ENCODE measurements at regions of chr4 and their contacts with region 1.

Region 1: DNA sequence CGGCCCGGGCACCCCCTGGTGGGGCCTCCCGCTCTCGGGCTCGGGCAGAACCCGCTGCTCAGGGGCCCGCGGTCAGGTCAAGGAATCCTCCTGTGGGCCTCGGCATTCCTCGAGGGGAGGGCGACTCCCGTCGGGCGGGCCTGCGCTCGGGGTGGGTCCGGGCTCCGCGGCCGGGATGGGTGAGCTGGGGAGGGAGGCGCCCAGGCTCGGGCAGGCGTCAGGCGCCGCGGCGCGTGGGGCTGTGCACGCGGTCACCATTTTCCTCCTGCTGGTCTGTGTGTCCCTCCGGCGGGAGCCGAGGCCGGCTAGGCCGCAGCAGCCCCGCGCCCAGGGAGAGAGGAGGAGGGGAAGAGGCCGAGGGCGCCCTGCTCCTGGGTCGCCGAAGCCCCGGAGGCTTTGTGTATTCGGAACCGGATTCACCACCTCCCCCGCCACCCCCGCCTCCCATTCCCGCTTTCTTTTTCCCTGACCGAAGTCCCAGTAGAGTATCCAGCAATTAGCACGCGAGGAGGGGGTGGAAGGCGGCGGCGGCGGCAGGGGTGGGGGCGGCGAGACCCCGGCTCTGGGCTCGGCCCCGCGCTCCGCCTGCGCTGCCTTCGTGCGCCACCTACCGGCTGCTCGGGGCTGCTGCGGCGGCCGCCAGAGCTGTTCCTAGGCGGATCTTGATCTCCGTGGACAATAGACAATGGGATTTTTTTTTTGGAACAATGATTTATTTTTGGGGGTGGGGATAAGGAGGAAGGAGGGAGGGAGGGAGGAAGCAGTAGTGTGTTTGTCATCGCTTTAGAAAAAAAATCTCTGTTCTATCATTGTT is 99.0 kb upstream of the MAML3 start:
- DNase-seq: peak; percentile 94
- H3K4me3 ChIP-seq: peak overlapping the region; percentile 65 to 80 (median 76)
- H3K27ac ChIP-seq: peak overlapping the region; percentile 86 to 96 (median 90)
- H3K4me1 ChIP-seq: peaks cover 8 to 62% (median 51%) of the 10 kb centered on the region in 4 donors
- H3K27me3 ChIP-seq: no peaks in the 10 kb centered on the region
- CTCF ChIP-seq: peak; percentile 90 to 97 (median 97)
- EP300 ChIP-seq: no peak
- POLR2A ChIP-seq: no peak

Region 2: GRCh38 chr4:139656614-139657486 is 596.1 kb before region 1 on chr4:
- intact Hi-C with region 1: loop called (anchors 5 kb)
- DNase-seq: no peak
- H3K4me3 ChIP-seq: no peak overlapping the region
- H3K27ac ChIP-seq: peak overlapping the region in 1 of 4 donors; percentile 29
- H3K4me1 ChIP-seq: peaks cover 17 to 27% (median 23%) of the 10 kb centered on the region in 4 donors
- H3K27me3 ChIP-seq: no peaks in the 10 kb centered on the region
- CTCF ChIP-seq: peak; percentile 56 to 87 (median 75)
- EP300 ChIP-seq: no peak
- POLR2A ChIP-seq: no peak

Region 3: GRCh38 chr4:140012688-140013486 is 240.1 kb before region 1 on chr4:
- intact Hi-C with region 1: loop called (anchors 5 kb)
- DNase-seq: no peak
- H3K4me3 ChIP-seq: peak overlapping the region in 3 of 4 donors; percentile 4 to 28 (median 9)
- H3K27ac ChIP-seq: no peak overlapping the region
- H3K4me1 ChIP-seq: peaks cover 0 to 9% (median 9%) of the 10 kb centered on the region in 4 donors
- H3K27me3 ChIP-seq: no peaks in the 10 kb centered on the region
- CTCF ChIP-seq: peak; percentile 52 to 62 (median 59)
- EP300 ChIP-seq: no peak
- POLR2A ChIP-seq: no peak

Region 4: DNA sequence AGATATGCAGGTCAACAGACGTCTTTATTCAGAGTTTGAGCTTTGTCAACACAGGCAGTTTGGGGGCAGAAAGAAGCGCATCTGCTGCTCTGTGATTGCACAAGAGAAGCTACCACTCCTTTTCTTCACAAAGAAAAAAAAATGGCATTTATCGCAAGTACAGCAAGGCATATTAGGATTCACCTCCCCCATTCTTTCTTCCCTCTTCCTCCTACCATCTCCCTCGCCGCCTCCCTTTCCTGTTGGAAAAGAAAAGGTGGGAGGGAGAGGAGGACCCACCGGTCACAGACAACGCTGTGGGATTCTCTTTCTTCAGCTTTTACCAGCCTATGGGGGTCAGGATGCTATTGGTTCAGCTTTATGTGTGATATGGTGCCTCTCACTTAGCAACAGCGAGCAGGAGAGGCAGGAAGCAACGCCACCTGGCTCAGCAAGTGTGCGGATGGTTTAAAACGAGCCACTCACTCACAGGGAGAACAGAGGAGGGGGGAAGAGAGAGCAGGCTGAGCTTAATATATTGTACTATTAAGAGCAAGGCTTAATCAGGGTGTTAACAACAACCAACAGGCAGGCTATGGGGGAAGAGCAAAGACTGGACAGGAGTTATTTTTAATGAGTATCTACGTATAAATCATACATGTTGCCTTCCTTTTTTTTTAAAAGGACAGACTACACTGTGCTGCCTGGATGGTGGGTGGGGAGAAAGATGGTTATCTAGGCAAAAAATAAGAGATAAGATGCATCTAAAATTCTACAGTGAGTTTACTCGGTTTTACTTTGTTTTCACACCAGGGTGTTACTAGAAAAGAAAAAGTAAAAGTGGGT is 203.7 kb before region 1 on chr4:
- intact Hi-C with region 1: loop called (anchors 5 kb)
- DNase-seq: no peak
- H3K4me3 ChIP-seq: peak overlapping the region; percentile 45 to 61 (median 53)
- H3K27ac ChIP-seq: peak overlapping the region; percentile 74 to 82 (median 76)
- H3K4me1 ChIP-seq: peaks cover 25 to 46% (median 44%) of the 10 kb centered on the region in 4 donors
- H3K27me3 ChIP-seq: no peaks in the 10 kb centered on the region
- CTCF ChIP-seq: peak; percentile 11 to 51 (median 43)
- EP300 ChIP-seq: no peak
- POLR2A ChIP-seq: no peak

Region 5: GRCh38 chr4:140308366-140309123 is 55.6 kb after region 1 on chr4:
- intact Hi-C with region 1: no loop called
- DNase-seq: no peak
- H3K4me3 ChIP-seq: peak overlapping the region in 2 of 4 donors; percentile 15 to 27
- H3K27ac ChIP-seq: peak overlapping the region; percentile 78 to 84 (median 82)
- H3K4me1 ChIP-seq: peaks cover 10 to 24% (median 18%) of the 10 kb centered on the region in 4 donors
- H3K27me3 ChIP-seq: no peaks in the 10 kb centered on the region
- CTCF ChIP-seq: no peak
- EP300 ChIP-seq: peak; percentile 9
- POLR2A ChIP-seq: no peak

Measured in esophagus muscularis mucosa (tissue), 4 donors.